Activated CD4-positive, alpha-beta T cell treated with anti-CD3 and anti-CD28 coated beads, Interleukin-2, amount 10 ng/mL, durations not matched to agents 24 days and 14 days (primary cell): ENCODE measurements at regions of chr11 and their contacts with region 1.

Region 1: GRCh38 chr11:118295834-118296454 is 8.6 kb upstream of the CD3E start:
- DNase-seq: peak; percentile 79
- H3K4me3 Mint-ChIP-seq: no peak overlapping the region
- H3K27ac Mint-ChIP-seq: peak overlapping the region; percentile 31
- H3K4me1 Mint-ChIP-seq: peaks cover 17% of the 10 kb centered on the region
- H3K27me3 Mint-ChIP-seq: peaks cover 2% of the 10 kb centered on the region

Region 2: DNA sequence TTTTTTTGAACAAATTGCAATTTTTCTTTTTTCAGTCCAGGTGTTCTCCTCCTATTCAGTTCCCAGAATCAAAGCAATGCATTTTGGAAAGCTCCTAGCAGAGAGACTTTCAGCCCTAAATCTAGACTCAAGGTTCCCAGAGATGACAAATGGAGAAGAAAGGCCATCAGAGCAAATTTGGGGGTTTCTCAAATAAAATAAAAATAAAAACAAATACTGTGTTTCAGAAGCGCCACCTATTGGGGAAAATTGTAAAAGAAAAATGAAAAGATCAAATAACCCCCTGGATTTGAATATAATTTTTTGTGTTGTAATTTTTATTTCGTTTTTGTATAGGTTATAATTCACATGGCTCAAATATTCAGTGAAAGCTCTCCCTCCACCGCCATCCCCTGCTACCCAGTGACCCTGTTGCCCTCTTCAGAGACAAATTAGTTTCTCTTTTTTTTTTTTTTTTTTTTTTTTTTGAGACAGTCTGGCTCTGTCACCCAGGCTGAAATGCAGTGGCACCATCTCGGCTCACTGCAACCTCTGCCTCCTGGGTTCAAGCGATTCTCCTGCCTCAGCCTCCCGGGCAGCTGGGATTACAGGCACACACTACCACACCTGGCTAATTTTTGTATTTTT is 57.3 kb after region 1 on chr11:
- intact Hi-C with region 1: loop called (anchors 1 kb)
- DNase-seq: no peak
- H3K4me3 Mint-ChIP-seq: no peak overlapping the region
- H3K27ac Mint-ChIP-seq: peak overlapping the region; percentile 29
- H3K4me1 Mint-ChIP-seq: peaks cover 13% of the 10 kb centered on the region
- H3K27me3 Mint-ChIP-seq: no peaks in the 10 kb centered on the region

Region 3: DNA sequence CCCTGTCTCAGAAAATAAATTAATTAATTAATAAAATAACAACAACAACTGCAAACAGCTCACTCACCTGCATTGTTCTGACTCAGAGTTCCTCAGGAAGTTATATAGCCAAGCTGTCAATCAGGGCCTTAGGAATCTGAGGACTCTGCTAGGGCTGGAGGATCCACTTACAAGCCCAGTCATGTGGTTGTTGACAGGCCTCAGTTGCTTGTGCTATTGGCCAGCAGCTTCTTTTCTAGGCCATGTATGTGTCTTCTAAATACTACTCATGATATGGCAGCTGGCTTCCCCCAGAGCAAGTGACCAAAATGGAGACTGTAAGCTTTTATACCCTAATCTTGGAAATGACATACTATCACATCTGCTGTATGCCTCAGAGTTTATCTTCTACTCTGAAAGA is 84.6 kb after region 1 on chr11:
- intact Hi-C with region 1: no loop called
- DNase-seq: no peak
- H3K4me3 Mint-ChIP-seq: no peak overlapping the region
- H3K27ac Mint-ChIP-seq: no peak overlapping the region
- H3K4me1 Mint-ChIP-seq: peaks cover 5% of the 10 kb centered on the region
- H3K27me3 Mint-ChIP-seq: no peaks in the 10 kb centered on the region

Region 4: DNA sequence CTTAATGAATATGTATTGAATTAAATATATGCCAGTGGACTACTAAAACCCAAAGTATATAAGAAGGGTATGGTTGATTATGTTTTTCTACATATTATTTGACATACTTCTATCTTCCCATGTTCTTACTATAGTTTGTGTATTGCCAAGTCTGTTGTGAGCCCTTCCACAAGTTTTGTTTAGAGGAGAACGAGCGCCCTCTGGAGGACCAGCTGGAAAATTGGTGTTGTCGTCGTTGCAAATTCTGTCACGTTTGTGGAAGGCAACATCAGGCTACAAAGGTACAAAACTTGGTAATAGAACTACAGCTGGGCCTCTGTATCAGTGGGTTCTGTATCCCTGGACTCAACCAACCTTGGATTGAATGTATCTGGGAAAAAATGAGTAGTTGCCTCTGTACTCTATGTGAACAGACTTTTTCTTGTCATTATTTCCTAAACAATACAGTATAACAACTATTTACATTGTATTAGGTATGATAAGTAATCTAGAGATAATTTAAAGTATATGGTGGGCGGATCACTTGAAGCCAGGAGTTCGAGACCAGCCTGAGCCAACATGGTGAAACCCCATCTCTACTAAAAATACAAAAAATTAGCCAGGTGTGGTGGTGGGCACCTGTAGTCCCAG is 192.7 kb after region 1 on chr11:
- intact Hi-C with region 1: loop called (anchors 5 kb)
- DNase-seq: peak; percentile 93
- H3K4me3 Mint-ChIP-seq: no peak overlapping the region
- H3K27ac Mint-ChIP-seq: peak overlapping the region; percentile 3
- H3K4me1 Mint-ChIP-seq: peaks cover 10% of the 10 kb centered on the region
- H3K27me3 Mint-ChIP-seq: no peaks in the 10 kb centered on the region

Region 5: GRCh38 chr11:118623269-118623655 is 327.3 kb after region 1 on chr11:
- intact Hi-C with region 1: no loop called
- DNase-seq: no peak
- H3K4me3 Mint-ChIP-seq: no peak overlapping the region
- H3K27ac Mint-ChIP-seq: no peak overlapping the region
- H3K4me1 Mint-ChIP-seq: peaks cover 4% of the 10 kb centered on the region
- H3K27me3 Mint-ChIP-seq: peaks cover 22% of the 10 kb centered on the region